ENCODE measurements at regions of chr16 and their contacts with region 1.

Region 1: GRCh38 chr16:53773150-53773846 is 69.3 kb downstream of the FTO start:
- DNase-seq: peak; percentile 34 to 69
- H3K4me3 ChIP-seq: no peak overlapping the region
- H3K27ac ChIP-seq: no peak overlapping the region
- H3K4me1 ChIP-seq: peaks cover 77% of the 10 kb centered on the region
- H3K27me3 ChIP-seq: no peaks in the 10 kb centered on the region
- CTCF ChIP-seq: peak; percentile 78

Region 2: GRCh38 chr16:53672461-53672860 is 100.8 kb before region 1 on chr16:
- CTCF ChIA-PET with region 1: no interaction called
- POLR2A ChIA-PET with region 1: no interaction called
- intact Hi-C with region 1: no loop called
- DNase-seq: no peak
- H3K4me3 ChIP-seq: no peak overlapping the region
- H3K27ac ChIP-seq: no peak overlapping the region
- H3K4me1 ChIP-seq: no peaks in the 10 kb centered on the region
- H3K27me3 ChIP-seq: no peaks in the 10 kb centered on the region
- CTCF ChIP-seq: no peak

Region 3: DNA sequence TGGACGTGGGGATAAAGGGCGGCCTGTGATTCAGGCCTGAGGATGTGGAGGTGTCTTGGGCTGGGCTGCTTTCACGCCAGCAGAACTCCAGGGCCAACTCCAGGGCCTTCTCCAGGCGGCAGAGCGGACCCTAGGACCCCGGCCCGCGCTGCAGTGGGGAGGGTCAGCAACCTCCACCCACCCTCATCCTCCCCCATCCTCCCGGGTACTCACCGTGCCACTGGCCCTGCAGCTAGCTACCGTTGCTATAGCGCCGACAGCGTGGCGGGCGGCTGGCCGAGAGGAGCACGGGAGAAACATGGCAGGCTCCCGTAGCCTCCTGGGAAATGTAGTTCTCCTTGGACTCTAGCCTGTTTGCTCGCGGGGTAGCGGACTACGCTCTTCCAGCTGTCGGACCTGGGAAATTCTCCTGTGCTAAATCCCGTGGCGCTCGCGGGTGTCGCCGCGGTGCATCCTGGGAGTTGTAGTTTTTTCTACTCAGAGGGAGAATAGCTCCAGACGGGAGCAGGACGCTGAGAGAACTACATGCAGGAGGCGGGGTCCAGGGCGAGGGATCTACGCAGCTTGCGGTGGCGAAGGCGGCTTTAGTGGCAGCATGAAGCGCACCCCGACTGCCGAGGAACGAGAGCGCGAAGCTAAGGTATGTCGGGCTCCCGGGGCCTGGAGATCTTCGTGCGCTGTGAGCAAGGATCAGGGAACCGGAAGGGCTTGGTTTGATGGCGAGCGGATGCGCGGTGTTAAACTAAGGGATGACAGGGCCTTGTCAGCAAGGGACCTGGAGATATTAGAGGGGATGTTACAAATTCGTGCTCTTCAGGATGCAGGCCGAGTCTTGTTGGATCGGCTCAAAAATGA is 69.5 kb before region 1 on chr16 and contains the starts of genes FTO and RPGRIP1L:
- CTCF ChIA-PET with region 1: no interaction called
- POLR2A ChIA-PET with region 1: interaction called, 3 read pairs
- intact Hi-C with region 1: loop called (anchors 1 kb)
- DNase-seq: peak; percentile 97 to 98
- H3K4me3 ChIP-seq: peak within 1 kb of the TSS; percentile 97
- H3K27ac ChIP-seq: no peak within 1 kb of the TSS
- H3K4me1 ChIP-seq: peaks cover 14% of the 10 kb centered on the region
- H3K27me3 ChIP-seq: no peaks in the 10 kb centered on the region
- CTCF ChIP-seq: no peak
- total RNA-seq, gene FTO: 49.2 and 58.1 TPM in 2 replicates
- total RNA-seq, gene RPGRIP1L: 8.1 and 14.0 TPM in 2 replicates

Region 4: DNA sequence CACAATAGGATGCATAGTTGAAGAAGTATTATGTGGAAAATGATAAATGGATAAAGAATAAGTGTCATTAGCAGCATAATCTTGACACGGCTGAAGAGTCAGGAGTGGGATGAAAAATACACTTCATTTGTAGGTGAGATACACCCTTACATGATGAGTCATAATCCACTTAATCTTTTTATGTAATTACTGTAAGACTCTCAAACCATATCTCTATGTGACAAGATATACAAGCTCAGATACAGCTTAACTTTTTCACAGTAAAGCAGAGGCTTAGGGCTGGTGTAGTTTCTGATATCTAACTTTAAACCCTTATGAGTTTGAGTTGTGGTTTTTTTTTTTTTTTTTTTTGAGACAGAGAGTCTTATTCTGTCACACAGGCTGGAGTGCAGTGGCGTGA is 31.8 kb after region 1 on chr16:
- CTCF ChIA-PET with region 1: no interaction called
- POLR2A ChIA-PET with region 1: no interaction called
- intact Hi-C with region 1: no loop called
- DNase-seq: no peak
- H3K4me3 ChIP-seq: no peak overlapping the region
- H3K27ac ChIP-seq: no peak overlapping the region
- H3K4me1 ChIP-seq: peaks cover 4% of the 10 kb centered on the region; the same call in 1 of the 2 replicates
- H3K27me3 ChIP-seq: no peaks in the 10 kb centered on the region
- CTCF ChIP-seq: no peak

Region 5: GRCh38 chr16:53945996-53946395 is 172.7 kb after region 1 on chr16:
- CTCF ChIA-PET with region 1: no interaction called
- POLR2A ChIA-PET with region 1: no interaction called
- intact Hi-C with region 1: loop called (anchors 2 kb)
- DNase-seq: peak; percentile 3 to 43
- H3K4me3 ChIP-seq: no peak overlapping the region
- H3K27ac ChIP-seq: no peak overlapping the region
- H3K4me1 ChIP-seq: peaks cover 23% of the 10 kb centered on the region
- H3K27me3 ChIP-seq: no peaks in the 10 kb centered on the region
- CTCF ChIP-seq: peak; percentile 77

Region 6: GRCh38 chr16:54062361-54063278 is 289.3 kb after region 1 on chr16:
- CTCF ChIA-PET with region 1: no interaction called
- POLR2A ChIA-PET with region 1: no interaction called
- intact Hi-C with region 1: no loop called
- DNase-seq: no peak
- H3K4me3 ChIP-seq: no peak overlapping the region
- H3K27ac ChIP-seq: no peak overlapping the region
- H3K4me1 ChIP-seq: peaks cover 10% of the 10 kb centered on the region
- H3K27me3 ChIP-seq: no peaks in the 10 kb centered on the region
- CTCF ChIP-seq: no peak

Region 7: DNA sequence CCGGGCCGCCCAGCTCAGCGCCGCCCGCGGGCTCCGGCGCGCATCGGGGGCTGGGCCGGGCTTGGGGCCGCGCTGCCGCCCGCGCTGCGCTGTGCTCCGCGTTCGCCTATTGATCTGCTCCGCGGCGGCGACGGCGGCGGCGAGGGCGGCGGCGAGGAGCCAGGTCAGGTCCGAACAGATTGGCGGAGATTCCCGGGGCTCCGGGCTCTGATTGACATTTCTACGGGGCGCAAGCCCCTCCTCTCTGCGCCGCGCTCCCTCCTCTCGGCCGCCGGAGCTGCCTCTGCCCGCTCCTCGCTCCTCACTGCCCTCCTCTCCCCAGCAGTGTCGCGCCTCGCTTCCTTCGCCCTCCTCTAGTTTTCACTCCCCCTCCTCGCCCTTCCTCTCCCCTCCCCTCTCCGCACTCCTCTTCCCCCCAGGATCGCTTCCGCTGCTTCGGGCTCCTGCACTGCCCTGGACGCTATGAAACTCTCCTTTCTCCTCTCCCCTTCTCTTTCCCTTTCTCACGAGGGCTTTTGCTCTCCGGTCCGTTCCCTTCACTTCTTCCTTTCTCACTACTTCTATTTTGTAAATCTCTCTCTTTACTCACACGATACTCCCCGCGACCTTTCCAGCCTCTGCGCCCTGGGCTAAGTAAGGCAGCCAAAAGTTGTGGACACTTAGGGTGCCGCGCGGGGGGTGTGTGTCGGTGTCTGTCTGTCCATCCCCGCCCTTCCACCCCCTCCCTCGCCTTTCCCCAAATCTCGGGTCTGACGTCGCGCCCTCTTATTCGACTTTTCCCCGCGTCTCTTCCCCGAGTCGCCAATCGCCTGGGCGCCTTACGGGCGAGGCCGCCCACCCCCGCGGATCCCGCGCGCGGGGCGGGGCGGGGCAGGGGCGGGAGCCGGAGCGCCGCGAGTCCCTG is 513.0 kb after region 1 on chr16 and contains the start of gene IRX3:
- CTCF ChIA-PET with region 1: no interaction called
- POLR2A ChIA-PET with region 1: interaction called, 3 read pairs
- intact Hi-C with region 1: loop called (anchors 1 kb)
- DNase-seq: peak; percentile 88 to 90
- H3K4me3 ChIP-seq: peak within 1 kb of the TSS; percentile 98
- H3K27ac ChIP-seq: peak within 1 kb of the TSS; percentile 86
- H3K4me1 ChIP-seq: peaks cover 6% of the 10 kb centered on the region
- H3K27me3 ChIP-seq: no peaks in the 10 kb centered on the region
- CTCF ChIP-seq: no peak
- total RNA-seq, gene IRX3: 13.1 and 16.0 TPM in 2 replicates

Region 8: DNA sequence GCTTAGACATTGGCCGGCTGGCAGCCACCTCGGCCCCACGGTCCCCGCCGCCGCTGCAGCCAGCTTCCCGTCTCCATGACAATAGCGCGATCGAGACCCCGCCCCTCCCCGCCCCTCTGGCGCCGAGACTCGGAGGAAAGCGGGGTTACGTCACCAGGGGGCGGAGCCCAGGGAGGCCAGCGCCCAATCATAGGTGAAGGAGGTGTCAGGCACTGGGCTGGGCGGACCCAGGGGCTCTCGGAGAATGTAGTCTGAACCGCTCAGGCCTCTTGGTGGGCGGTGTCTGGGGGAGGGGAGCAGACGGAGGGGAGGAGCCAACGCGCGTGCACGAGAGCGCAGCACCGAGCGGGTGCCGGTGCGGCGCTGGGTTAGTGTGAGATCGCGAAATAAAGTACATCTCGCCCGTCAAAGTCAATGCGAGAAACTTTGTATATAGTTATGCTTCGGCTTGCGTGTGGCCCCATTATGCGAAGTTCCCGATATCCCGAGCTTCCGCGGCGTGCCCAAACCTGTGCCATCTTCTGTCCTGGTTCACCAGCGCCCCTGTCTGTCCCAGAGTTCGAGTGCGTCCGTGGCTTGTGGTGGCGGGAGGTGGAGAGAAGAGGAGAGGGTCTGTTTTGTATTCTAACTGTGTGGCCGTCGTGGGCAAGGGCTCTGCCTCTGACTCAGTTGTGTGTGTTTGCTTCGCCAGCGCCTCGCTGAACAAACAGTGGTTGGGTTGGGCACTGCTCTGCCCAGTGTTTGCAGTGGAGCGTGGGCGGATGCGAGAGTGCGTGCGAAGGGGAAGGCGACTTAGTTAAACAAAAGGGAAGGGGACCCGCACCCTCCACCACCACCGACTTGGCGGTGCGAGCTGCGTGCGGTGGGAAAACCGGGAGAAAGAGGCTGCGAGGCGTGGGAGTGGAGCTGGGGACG is 1156.0 kb after region 1 on chr16:
- CTCF ChIA-PET with region 1: no interaction called
- POLR2A ChIA-PET with region 1: no interaction called
- intact Hi-C with region 1: loop called (anchors 2 kb)
- DNase-seq: peak; percentile 89 to 95
- H3K4me3 ChIP-seq: peak overlapping the region; percentile 80
- H3K27ac ChIP-seq: no peak overlapping the region; the same call in 1 of the 2 replicates
- H3K4me1 ChIP-seq: peaks cover 24% of the 10 kb centered on the region
- H3K27me3 ChIP-seq: no peaks in the 10 kb centered on the region
- CTCF ChIP-seq: no peak; the same call in 1 of the 2 replicates

Measured in PC-9 (cell line).